ENCODE measurements at regions of chr14 and their contacts with region 1.

Region 1: GRCh38 chr14:21068521-21069387 is 1.4 kb upstream of the ARHGEF40 start:
- DNase-seq: peak; percentile 71
- H3K4me3 ChIP-seq: peak overlapping the region; percentile 16 to 90 (median 70)
- H3K27ac ChIP-seq: peak overlapping the region; percentile 92 to 96 (median 92)
- H3K4me1 ChIP-seq: peaks cover 20 to 44% (median 28%) of the 10 kb centered on the region in 4 donors
- H3K27me3 ChIP-seq: no peaks in the 10 kb centered on the region
- CTCF ChIP-seq: peak; percentile 58 to 80 (median 65)
- EP300 ChIP-seq: no peak
- POLR2A ChIP-seq: no peak

Region 2: DNA sequence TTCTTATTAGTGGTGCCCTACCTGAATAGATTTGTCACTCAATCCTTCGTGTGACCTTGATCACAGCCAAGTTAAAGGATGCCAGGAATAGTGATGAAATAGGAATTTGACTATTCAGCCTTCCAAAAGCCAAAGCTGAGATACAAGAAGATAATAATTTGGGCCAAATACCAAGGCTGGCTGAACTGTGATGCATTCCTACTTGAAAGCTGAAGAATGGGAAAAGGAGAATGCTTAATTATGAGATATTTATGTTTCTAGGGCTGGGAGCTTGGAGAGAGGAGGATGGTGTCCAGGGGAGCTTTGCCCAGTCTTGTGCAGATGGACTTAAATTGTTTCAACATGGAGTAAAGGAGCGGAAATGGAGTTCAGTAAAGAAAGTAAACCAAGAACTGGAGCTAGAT is 21.4 kb before region 1 on chr14:
- in situ Hi-C with region 1: no loop called
- intact Hi-C with region 1: loop called (anchors 1 kb)
- DNase-seq: no peak
- H3K4me3 ChIP-seq: no peak overlapping the region
- H3K27ac ChIP-seq: no peak overlapping the region
- H3K4me1 ChIP-seq: peaks cover 10 to 22% (median 12%) of the 10 kb centered on the region in 4 donors
- H3K27me3 ChIP-seq: no peaks in the 10 kb centered on the region
- CTCF ChIP-seq: no peak
- EP300 ChIP-seq: no peak
- POLR2A ChIP-seq: no peak

Region 3: DNA sequence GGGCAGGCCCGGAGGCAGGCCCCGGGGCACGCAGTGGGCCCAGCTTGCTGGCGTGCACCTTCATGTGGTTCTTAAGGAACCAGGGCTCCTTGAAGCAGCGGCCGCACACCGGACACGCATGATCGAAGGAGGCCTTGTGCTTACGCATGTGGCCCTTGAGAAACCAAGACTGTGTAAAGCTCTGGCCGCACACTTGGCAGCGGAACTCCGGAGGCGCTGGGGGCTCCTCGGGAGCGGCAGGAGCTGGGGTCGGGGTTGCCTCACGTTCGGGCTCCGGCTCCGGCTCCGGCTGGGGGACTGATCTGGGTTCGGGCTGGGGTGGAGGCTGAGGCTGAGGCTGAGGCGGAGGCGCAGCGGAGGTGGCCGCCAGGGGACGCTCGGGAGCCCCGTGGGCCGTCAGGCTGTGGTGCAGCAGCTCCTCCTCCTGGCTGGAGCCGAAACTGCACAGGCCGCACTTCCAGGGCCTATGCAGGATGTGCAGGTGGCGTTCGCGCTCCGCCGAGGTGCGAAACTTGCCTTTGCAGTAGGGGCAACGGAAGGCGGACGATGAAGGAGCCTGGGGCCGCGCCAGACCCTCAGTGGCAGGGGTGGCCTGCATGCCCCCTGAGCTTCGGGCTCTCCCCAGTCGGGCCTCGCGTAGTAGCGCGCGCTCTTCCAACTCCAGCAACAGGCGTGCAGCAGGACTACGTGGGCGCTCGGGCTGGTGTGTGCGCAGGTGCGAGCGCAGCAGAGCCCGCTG is 23.7 kb after region 1 on chr14:
- in situ Hi-C with region 1: no loop called
- intact Hi-C with region 1: loop called (anchors 2 kb)
- DNase-seq: peak; percentile 92
- H3K4me3 ChIP-seq: no peak overlapping the region
- H3K27ac ChIP-seq: peak overlapping the region in 3 of 4 donors; percentile 15 to 52 (median 45)
- H3K4me1 ChIP-seq: peaks cover 11 to 57% (median 42%) of the 10 kb centered on the region in 4 donors
- H3K27me3 ChIP-seq: no peaks in the 10 kb centered on the region
- CTCF ChIP-seq: peak; percentile 100
- EP300 ChIP-seq: no peak
- POLR2A ChIP-seq: no peak

Region 4: GRCh38 chr14:21203470-21204166 is 134.9 kb after region 1 on chr14:
- in situ Hi-C with region 1: no loop called
- intact Hi-C with region 1: no loop called
- DNase-seq: no peak
- H3K4me3 ChIP-seq: no peak overlapping the region
- H3K27ac ChIP-seq: no peak overlapping the region
- H3K4me1 ChIP-seq: no peaks in the 10 kb centered on the region
- H3K27me3 ChIP-seq: no peaks in the 10 kb centered on the region
- CTCF ChIP-seq: no peak
- EP300 ChIP-seq: no peak
- POLR2A ChIP-seq: peak; percentile 12